ENCODE measurements at regions of chr13 and their contacts with region 1.

Region 1: GRCh38 chr13:72504131-72504841 is 223.1 kb downstream of the MZT1 start:
- ATAC-seq: peak in 5 of 8 experiments; percentile 77 to 83 (median 79)
- H3K4me3 ChIP-seq: no peak overlapping the region
- H3K27ac ChIP-seq: peak overlapping the region; percentile 2 to 59
- H3K4me1 ChIP-seq: peaks cover 14 to 42% of the 10 kb centered on the region in 2 donors

Region 2: GRCh38 chr13:72403396-72404010 is 100.8 kb before region 1 on chr13:
- in situ Hi-C with region 1: loop called in 1 of 9 experiments (anchors 25 kb)
- ATAC-seq: peak in 1 of 8 experiments; percentile 13
- H3K4me3 ChIP-seq: no peak overlapping the region
- H3K27ac ChIP-seq: no peak overlapping the region
- H3K4me1 ChIP-seq: peaks cover 0 to 13% of the 10 kb centered on the region in 2 donors

Measured in motor neuron (in vitro differentiated cells).